RWPE1 (cell line): ENCODE measurements at regions of chr1 and their contacts with region 1.

Region 1: GRCh38 chr1:48007044-48007443 is 9.9 kb upstream of the TRABD2B start:
- DNase-seq: peak; percentile 36
- H3K27ac ChIP-seq: peak overlapping the region; percentile 68
- CTCF ChIP-seq: no peak

Region 2: DNA sequence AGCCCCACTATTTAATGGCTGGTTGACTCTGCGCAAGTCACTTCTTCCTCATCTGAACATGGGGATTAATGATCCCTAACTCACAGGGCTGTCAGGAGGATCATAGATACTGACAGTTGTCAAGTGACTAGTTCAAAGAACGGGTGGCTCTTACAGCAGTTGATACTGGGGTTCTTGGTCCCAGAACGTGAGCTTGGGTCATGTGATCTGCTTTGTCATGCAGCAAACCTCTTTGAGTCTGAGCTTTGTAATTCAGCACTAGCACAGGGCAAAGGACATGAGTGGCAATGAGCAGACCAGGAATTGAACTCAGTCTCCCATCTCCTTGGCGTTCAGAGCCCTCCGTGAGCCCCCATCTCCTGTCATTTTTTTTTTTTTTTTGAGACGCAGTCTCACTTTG is 74.3 kb before region 1 on chr1:
- CTCF ChIA-PET with region 1: interaction called, 11 read pairs
- POLR2A ChIA-PET with region 1: no interaction called
- DNase-seq: no peak
- H3K27ac ChIP-seq: peak overlapping the region; percentile 49
- CTCF ChIP-seq: no peak

Region 3: GRCh38 chr1:48190881-48191280 is 183.8 kb after region 1 on chr1:
- CTCF ChIA-PET with region 1: no interaction called
- POLR2A ChIA-PET with region 1: no interaction called
- DNase-seq: no peak
- H3K27ac ChIP-seq: no peak overlapping the region
- CTCF ChIP-seq: no peak